ENCODE measurements at regions of chr3 and their contacts with region 1.

Region 1: GRCh38 chr3:73365756-73366397 is 258.9 kb downstream of the PDZRN3 start:
- DNase-seq: no peak
- H3K4me3 ChIP-seq: no peak overlapping the region
- H3K27ac ChIP-seq: peak overlapping the region in 3 of 4 donors; percentile 33 to 53 (median 44)
- H3K4me1 ChIP-seq: peaks cover 0 to 18% (median 11%) of the 10 kb centered on the region in 4 donors
- H3K27me3 ChIP-seq: no peaks in the 10 kb centered on the region
- CTCF ChIP-seq: no peak
- EP300 ChIP-seq: no peak
- POLR2A ChIP-seq: no peak

Region 2: DNA sequence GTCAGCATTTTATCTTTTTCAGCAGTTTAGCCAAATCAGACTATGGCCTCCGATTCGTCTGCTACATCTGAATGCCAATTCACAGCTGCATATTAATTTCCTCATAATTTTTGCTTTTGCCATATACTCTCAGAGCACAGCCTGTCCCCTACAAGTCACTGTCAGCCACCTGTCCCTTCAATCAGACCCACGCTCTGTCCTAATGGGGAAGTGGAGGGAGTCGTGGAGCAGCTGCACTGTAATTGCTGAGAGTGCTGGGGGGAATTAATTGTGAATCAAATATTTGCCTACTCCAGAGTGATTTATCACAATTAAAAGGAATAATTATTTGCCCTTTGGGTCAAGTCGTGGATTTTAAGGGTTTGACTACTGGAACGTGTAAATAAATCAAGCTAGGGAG is 228.9 kb before region 1 on chr3:
- intact Hi-C with region 1: loop called (anchors 10 kb)
- DNase-seq: peak; percentile 37
- H3K4me3 ChIP-seq: no peak overlapping the region
- H3K27ac ChIP-seq: no peak overlapping the region
- H3K4me1 ChIP-seq: peaks cover 0 to 3% (median 0%) of the 10 kb centered on the region in 4 donors
- H3K27me3 ChIP-seq: no peaks in the 10 kb centered on the region
- CTCF ChIP-seq: no peak
- EP300 ChIP-seq: no peak
- POLR2A ChIP-seq: no peak

Region 3: DNA sequence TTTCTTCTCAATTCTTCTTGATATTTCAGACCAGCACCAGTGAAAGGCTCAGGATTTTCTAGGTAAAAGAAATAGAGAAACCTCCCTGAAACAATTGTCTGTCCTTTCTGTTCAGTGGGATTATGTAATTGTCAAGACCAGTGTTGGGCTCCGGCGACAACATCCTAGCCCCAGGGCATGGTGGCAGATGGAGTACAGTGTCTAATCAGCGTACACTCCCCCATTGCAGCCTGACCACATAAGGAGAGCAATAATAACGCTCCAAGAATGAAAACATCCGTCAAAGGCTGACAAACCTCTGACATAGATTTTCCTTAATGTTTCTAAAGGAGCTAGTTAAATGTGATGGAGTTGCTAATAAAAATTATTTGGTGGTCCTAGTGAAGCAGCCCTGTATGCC is 159.9 kb before region 1 on chr3:
- intact Hi-C with region 1: no loop called
- DNase-seq: no peak
- H3K4me3 ChIP-seq: no peak overlapping the region
- H3K27ac ChIP-seq: no peak overlapping the region
- H3K4me1 ChIP-seq: no peaks in the 10 kb centered on the region
- H3K27me3 ChIP-seq: no peaks in the 10 kb centered on the region
- CTCF ChIP-seq: no peak
- EP300 ChIP-seq: no peak
- POLR2A ChIP-seq: no peak